ENCODE measurements at regions of chr3 and their contacts with region 1.

Region 1: DNA sequence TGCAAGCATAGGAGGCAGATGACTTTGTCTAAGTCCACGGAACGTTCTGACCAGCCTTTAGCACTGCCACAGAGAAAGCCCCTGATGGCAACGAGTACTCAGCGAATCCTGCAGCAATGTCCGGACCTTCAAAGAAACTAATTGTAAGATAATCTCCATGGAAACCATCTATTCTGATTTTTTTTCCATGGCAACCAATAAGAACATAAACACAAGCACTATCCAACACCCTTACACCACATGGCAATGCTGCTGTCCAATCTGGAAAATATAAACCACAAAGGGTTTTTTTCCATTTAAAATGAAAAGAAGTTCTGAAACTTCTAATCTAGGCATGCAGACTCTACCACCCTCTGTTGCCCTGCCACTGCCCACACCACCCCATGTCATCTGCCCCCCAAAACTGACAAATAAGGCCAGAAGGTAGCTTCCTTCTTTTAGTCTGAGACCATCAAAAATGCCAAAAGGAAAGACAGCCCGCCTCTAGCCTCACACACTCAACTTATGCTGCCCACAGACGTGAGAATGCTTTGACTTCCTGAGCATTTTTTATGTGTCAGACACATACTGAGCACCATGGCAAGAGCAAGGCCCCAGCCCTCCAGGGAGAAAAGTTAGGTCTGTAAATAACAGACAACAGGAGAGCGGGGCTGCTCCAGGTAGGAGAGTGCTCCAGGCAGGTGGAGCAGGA is 44.5 kb downstream of the POC1A start:
- DNase-seq: no peak
- H3K4me3 ChIP-seq: no peak overlapping the region
- H3K27ac ChIP-seq: no peak overlapping the region
- H3K4me1 ChIP-seq: no peaks in the 10 kb centered on the region
- H3K27me3 ChIP-seq: no peaks in the 10 kb centered on the region

Region 2: DNA sequence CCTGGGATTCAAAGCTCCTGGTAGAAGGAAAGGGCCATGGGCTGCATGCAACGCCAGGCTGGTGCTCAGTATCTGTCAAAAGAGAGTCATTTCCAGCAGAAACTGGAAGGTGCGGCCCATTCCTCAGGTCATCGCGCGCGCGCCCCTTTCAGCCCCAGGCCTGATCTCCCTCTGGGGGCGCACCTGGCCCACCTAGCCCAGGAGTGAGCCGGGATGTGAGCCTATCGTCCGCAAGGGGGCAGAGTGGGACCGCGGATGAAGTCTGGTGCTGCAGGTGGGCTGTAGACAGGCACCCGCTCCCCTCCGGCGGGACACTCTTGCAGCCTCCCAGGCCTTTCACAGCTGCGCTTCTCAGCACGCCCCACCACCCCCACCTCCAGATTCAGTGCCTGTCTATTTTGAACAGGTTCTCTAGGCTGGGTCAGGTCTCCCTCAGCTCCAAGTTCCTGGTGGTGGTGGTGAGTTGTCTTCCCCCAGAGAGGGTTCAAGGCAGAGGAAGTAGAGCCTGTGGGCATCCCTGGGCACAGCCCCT is 108.2 kb before region 1 on chr3:
- in situ Hi-C with region 1: loop called (anchors 10 kb)
- DNase-seq: peak; percentile 67
- H3K4me3 ChIP-seq: no peak overlapping the region
- H3K27ac ChIP-seq: no peak overlapping the region
- H3K4me1 ChIP-seq: peaks cover 12% of the 10 kb centered on the region
- H3K27me3 ChIP-seq: no peaks in the 10 kb centered on the region

Measured in GM23248 (cell line).